Transverse colon (tissue), 4 donors: ENCODE measurements at regions of chr22 and their contacts with region 1.

Region 1: DNA sequence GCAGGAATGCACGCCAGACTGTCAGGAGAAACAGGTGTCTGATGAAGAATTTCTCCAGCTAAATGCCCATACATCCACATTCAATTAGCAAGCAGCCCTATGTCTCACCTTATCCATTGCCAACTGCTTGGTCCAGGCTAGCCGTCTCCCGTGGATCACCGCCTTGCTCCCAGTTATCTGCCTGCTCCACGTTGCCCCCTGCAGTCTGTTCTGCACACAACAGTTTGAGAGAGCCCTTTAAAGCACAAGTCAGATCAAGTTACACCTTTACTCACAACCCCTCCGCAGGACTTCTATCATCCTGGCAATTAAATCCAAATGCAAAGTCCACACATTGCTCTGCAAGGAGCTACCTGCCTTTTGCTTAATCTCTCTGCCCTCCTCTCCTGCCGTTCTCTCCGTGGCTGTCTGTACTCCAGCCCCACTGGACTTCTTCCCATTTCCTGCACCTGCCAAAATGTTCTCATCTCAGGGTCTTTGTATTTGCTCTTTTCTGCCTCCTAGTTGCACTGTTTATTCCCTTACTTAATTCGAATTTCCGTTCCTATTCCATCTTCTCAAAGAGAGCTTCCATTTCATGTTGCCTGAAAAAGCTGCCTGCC is 185.3 kb upstream of the LARGE1 start:
- DNase-seq: peak; percentile 57
- H3K4me3 ChIP-seq: no peak overlapping the region
- H3K27ac ChIP-seq: no peak overlapping the region
- H3K4me1 ChIP-seq: no peaks in the 10 kb centered on the region
- H3K27me3 ChIP-seq: peaks cover 11% of the 10 kb centered on the region
- CTCF ChIP-seq: peak; percentile 59 to 69 (median 64)
- EP300 ChIP-seq: no peak
- POLR2A ChIP-seq: no peak

Region 2: GRCh38 chr22:33519071-33519973 is 586.2 kb before region 1 on chr22:
- in situ Hi-C with region 1: no loop called
- intact Hi-C with region 1: loop called (anchors 10 kb)
- DNase-seq: peak; percentile 22
- H3K4me3 ChIP-seq: no peak overlapping the region
- H3K27ac ChIP-seq: peak overlapping the region in 1 of 4 donors; percentile 19
- H3K4me1 ChIP-seq: peaks cover 0 to 16% (median 6%) of the 10 kb centered on the region in 4 donors
- H3K27me3 ChIP-seq: no peaks in the 10 kb centered on the region
- CTCF ChIP-seq: peak; percentile 59 to 71 (median 65)
- EP300 ChIP-seq: no peak
- POLR2A ChIP-seq: no peak

Region 3: GRCh38 chr22:34437140-34437539 is 331.6 kb after region 1 on chr22:
- in situ Hi-C with region 1: no loop called
- intact Hi-C with region 1: no loop called
- DNase-seq: no peak
- H3K4me3 ChIP-seq: no peak overlapping the region
- H3K27ac ChIP-seq: no peak overlapping the region
- H3K4me1 ChIP-seq: no peaks in the 10 kb centered on the region
- H3K27me3 ChIP-seq: no peaks in the 10 kb centered on the region
- CTCF ChIP-seq: no peak
- EP300 ChIP-seq: no peak
- POLR2A ChIP-seq: no peak